BJ (cell line): ENCODE measurements at regions of chr7 and their contacts with region 1.

Region 1: DNA sequence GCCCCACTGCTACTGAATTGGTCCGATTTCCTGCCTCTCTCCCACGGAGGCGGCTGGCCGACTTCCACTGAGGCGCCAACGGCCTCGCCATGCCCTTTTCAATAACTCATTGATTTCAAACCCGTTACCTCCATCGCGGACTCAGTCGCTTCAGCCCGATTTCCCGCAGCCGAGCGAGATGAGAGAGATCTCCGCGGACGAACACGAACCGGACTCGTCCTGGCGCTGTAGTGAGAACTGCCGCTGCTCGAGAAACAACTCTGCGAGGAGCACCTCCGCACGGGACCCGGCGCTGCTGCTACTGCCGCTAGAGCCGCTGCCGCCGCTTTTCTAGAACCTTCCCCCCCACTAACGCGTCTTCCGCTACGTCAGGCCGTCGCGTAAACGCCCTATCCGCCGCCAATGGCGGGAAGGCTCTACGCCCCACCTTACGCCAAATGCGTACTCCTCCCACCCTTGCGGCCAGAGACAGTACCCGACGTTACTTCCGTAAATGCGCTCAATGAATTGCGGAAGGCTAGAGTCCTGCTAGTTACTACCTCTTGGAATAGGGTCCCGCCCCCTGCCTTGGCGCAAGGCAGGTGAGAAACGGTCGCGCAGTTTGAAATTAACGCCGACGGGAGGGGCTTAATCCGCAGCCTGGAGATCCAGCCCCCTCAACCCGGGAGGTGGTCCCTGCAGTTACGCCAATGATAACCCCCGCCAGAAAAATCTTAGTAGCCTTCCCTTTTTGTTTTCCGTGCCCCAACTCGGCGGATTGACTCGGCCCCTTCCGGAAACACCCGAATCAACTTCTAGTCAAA is at the start of gene HNRNPA2B1:
- DNase-seq: peak; percentile 89
- H3K4me3 ChIP-seq: peak within 1 kb of the TSS; percentile 98
- H3K27me3 ChIP-seq: no peaks in the 10 kb centered on the region
- CTCF ChIP-seq: 0 out of 2 replicates have a peak, but pooled peaks have one; percentile 8
- polyA plus RNA-seq, gene HNRNPA2B1: 139 and 249 TPM in 2 replicates

Region 2: GRCh38 chr7:26187380-26188205 is 13.1 kb before region 1 on chr7:
- CTCF ChIA-PET with region 1: interaction called, 28 read pairs
- POLR2A ChIA-PET with region 1: interaction called, 3 read pairs
- DNase-seq: no peak
- H3K4me3 ChIP-seq: no peak overlapping the region
- H3K27me3 ChIP-seq: no peaks in the 10 kb centered on the region
- CTCF ChIP-seq: no peak

Region 3: DNA sequence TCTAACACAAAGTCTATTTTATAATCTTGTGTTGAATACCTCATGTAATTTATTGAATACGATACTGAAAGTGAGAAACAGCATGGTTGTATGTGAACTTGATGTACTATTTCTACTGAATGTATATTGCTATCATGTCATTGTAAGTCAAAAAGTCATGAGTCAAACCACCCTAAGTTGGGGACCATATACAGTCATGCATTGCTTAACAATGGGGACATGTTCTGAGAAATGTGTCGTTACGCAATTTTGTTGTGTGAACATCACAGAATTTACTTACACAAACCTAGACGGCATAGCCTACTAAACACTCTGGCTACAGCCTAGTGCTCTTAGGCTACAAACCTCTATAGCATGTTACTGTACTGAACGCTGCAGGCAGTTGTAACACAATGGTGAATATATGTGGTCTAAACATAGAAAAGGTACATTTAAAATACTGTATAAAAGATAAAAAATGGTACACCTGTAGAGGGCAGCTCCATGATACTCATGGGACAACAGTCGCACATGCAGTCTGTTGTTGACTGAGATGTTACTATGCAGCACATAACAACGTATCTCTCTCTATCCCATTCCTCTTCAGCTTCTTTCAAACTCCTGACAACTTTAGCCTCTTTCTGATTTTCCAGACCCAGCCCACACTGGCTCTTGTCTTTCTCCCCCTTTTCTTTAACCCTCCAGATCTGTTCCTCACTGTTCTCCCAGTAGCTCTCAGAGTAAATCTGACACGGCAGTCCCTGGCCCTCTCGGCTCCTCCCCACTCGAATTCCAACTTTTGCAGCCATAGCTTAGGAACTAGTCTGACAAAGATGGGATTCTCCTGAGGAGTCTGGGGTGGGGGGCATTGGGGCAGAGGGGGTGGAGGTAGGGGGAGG is 181.1 kb after region 1 on chr7:
- CTCF ChIA-PET with region 1: no interaction called
- POLR2A ChIA-PET with region 1: no interaction called
- DNase-seq: no peak
- H3K4me3 ChIP-seq: no peak overlapping the region
- H3K27me3 ChIP-seq: peaks cover 8% of the 10 kb centered on the region
- CTCF ChIP-seq: no peak